PC-3 (cell line): ENCODE measurements at regions of chr1 and their contacts with region 1.

Region 1: DNA sequence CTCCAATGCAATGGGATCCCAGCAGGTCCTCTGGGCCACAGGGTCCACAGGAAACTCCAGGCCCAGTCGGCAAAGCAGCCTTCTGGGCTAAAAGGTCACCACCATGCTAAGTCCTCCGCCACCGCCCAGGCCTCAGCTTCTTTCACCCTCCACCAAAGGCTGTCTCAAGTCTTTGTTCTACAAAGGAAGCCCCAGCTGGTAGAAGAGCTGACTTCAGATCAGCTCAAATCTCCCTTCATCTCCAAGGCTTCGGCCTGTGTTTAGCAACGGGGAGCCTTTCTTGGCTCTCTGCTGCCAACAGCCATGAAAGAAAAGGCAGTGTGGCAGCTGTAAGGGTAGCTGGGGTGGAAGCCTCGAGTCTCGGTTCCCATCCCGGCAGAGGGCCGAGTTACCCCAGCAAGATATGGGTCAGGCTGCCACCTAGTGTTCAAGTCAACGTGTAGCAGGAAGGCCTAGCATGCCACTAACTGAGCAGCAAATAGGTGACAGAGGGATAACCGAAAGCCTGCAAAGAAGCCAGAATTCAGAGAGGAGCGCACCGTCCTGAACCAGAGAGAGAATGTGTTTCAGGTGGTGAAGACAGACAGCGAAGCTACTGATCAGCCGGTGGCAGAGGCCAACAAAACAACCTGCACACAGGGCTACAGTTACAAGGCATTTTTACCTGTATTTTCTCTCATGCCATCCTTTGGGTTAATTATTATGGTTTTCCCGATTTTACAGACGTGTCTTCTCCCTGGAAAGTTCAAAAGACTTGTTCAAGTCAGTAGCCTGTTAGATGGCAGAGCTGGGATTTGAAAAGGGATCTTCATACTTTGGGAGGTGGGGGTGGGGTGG is 26.8 kb upstream of the CRNN start:
- DNase-seq: peak; percentile 82
- ATAC-seq: peak; percentile 97
- H3K4me3 ChIP-seq: no peak overlapping the region
- H3K27ac ChIP-seq: no peak overlapping the region
- H3K4me1 ChIP-seq: peaks cover 6% of the 10 kb centered on the region
- H3K27me3 ChIP-seq: peaks cover 25% of the 10 kb centered on the region
- CTCF ChIP-seq: peak; percentile 94

Region 2: DNA sequence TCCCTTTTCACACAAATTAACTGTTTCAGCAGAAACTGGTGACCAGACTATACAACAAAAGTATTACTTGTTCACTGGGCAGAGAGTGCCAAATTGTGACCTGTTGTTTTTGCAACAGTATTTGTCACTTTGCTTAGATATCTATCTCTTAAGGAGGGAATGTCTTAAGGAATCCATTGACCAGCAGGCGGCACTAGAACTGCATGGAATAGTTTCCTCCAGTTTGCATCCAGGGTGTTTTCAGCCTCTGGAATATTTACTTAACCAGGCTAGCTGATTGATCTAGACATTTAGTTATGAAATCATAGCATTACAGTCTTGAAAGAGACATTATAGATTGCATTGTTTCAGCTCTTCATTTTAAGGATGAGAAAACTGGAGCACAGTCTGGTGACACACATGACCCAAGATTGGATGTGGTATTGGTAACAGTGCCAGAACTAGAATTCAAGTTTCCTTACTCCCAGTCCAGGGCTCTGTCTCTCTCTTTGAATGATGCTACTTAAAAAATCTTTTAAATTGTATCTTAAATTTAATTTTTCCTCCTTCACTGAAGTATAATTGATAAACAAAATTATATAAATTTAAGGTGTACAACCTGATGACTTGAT is 298.8 kb before region 1 on chr1:
- CTCF ChIA-PET with region 1: no interaction called
- POLR2A ChIA-PET with region 1: no interaction called
- intact Hi-C with region 1: loop called (anchors 5 kb)
- DNase-seq: peak; percentile 90
- ATAC-seq: peak; percentile 95
- H3K4me3 ChIP-seq: no peak overlapping the region
- H3K27ac ChIP-seq: no peak overlapping the region
- H3K4me1 ChIP-seq: no peaks in the 10 kb centered on the region
- H3K27me3 ChIP-seq: peaks cover 25% of the 10 kb centered on the region; the same call in 1 of the 2 replicates
- CTCF ChIP-seq: peak; percentile 99

Region 3: DNA sequence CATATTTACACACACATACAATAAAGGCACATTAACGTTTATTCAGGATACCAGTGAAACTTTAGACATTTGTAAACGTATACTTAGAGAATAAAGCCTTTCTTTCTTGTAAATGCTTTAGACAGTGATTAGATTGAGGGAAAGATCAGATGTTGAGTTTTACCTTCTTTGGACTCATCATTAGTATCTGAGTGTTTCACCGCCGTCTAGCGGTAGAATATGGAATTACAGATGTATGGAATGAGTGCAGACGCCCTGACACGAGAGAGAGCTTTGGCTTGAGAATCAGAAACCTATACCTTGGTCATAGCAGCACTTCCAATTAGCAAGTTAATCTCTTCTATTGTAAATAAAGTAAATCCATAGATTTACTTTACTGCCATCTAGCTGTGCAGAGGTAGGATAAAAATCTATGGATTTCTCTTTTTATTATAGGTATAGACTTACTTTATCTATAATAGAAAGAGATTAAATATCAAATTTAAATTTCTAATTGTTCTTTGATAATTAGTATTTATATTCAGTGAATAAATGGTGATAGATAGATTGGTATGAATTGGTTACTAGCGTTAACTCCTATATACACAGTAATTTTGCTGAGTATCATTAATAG is 93.6 kb before region 1 on chr1:
- CTCF ChIA-PET with region 1: no interaction called
- POLR2A ChIA-PET with region 1: no interaction called
- intact Hi-C with region 1: loop called (anchors 2 kb)
- DNase-seq: peak; percentile 91
- ATAC-seq: peak; percentile 76
- H3K4me3 ChIP-seq: no peak overlapping the region
- H3K27ac ChIP-seq: no peak overlapping the region
- H3K4me1 ChIP-seq: no peaks in the 10 kb centered on the region
- H3K27me3 ChIP-seq: peaks cover 5% of the 10 kb centered on the region; the same call in 1 of the 2 replicates
- CTCF ChIP-seq: peak; percentile 95

Region 4: GRCh38 chr1:152398812-152399698 is 41.8 kb before region 1 on chr1:
- CTCF ChIA-PET with region 1: interaction called, 19 read pairs
- POLR2A ChIA-PET with region 1: no interaction called
- intact Hi-C with region 1: loop called (anchors 1 kb)
- DNase-seq: peak; percentile 54
- ATAC-seq: peak; percentile 86
- H3K4me3 ChIP-seq: no peak overlapping the region
- H3K27ac ChIP-seq: no peak overlapping the region
- H3K4me1 ChIP-seq: no peaks in the 10 kb centered on the region
- H3K27me3 ChIP-seq: peaks cover 12% of the 10 kb centered on the region; the same call in 1 of the 2 replicates
- CTCF ChIP-seq: peak; percentile 64

Region 5: DNA sequence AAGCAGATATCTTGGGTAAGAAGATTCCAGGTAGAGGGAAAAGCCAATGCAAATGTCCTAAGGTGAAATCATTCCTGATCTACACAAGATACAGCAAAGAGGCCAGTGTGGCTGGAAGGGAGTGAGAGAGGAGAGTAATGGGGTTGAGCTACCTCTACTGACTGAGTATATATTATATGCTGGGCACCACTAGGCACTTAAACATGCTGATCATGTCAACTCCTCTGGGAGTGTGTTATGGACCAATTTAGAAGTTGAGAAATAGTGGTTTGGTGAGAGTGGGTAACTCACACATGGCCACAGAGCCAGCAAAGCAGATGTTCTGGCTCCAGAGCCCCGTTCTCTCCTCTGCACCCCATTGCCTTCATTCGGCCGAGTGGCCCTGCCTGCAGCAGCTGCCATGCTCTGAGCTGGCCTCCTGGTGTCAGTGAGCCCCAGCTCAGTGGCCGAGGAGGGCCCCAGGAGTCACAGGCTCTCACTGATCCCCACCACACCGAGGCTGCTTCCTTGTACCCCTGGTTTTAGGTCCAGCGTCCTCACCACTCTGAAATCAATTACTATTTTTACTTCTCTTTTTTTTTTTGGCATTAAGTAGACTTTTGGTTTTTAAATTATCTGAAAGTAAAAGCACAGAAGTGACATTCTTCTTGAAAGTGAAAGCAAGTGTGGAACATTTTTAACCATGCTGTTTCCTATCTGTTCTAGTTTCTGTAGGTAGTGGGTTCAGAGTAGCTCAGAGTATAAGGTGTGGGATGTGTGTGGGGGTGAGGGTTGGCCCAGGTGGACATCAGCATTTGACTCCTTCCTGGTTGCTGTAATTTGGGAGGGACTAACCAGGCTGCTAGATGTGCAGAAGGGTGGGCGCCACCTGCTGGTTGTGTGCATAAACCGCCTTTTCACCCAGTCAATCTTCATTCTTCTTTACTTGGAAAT is 19.0 kb after region 1 on chr1:
- CTCF ChIA-PET with region 1: interaction called, 17 read pairs
- POLR2A ChIA-PET with region 1: no interaction called
- intact Hi-C with region 1: no loop called
- DNase-seq: peak; percentile 76
- ATAC-seq: peak; percentile 66
- H3K4me3 ChIP-seq: no peak overlapping the region
- H3K27ac ChIP-seq: no peak overlapping the region
- H3K4me1 ChIP-seq: no peaks in the 10 kb centered on the region
- H3K27me3 ChIP-seq: no peaks in the 10 kb centered on the region
- CTCF ChIP-seq: peak; percentile 94